Naive thymus-derived CD4-positive, alpha-beta T cell (primary cell): ENCODE measurements at regions of chr6 and their contacts with region 1.

Region 1: GRCh38 chr6:109095027-109095834 is at the start of gene CEP57L1:
- DNase-seq: peak; percentile 88 to 96 (median 94)
- ATAC-seq: peak; percentile 81
- H3K4me3 ChIP-seq: peak within 1 kb of the TSS; percentile 96
- H3K4me3 Mint-ChIP-seq: peak within 1 kb of the TSS; percentile 92 to 98 (median 96)
- H3K27ac ChIP-seq: peak within 1 kb of the TSS; percentile 94
- H3K27ac Mint-ChIP-seq: peak within 1 kb of the TSS; percentile 98 to 99 (median 99)
- H3K4me1 ChIP-seq: peaks cover 21 to 29% of the 10 kb centered on the region in 2 donors
- H3K4me1 Mint-ChIP-seq: peaks cover 26 to 64% (median 54%) of the 10 kb centered on the region in 7 donors
- H3K27me3 ChIP-seq: no peaks in the 10 kb centered on the region
- H3K27me3 Mint-ChIP-seq: no peaks in the 10 kb centered on the region
- total RNA-seq, gene CEP57L1: 3.1 to 17.2 (median 6.5) TPM

Region 2: GRCh38 chr6:108074359-108075144 is 1020.7 kb before region 1 on chr6 and contains the start of gene OSTM1:
- CTCF ChIA-PET with region 1: no interaction called
- POLR2A ChIA-PET with region 1: no interaction called
- intact Hi-C with region 1: loop called (anchors 1 kb)
- DNase-seq: peak; percentile 88 to 98 (median 94)
- ATAC-seq: peak; percentile 99
- H3K4me3 ChIP-seq: peak within 1 kb of the TSS; percentile 99
- H3K4me3 Mint-ChIP-seq: peak within 1 kb of the TSS; percentile 84 to 94 (median 90)
- H3K27ac ChIP-seq: peak within 1 kb of the TSS; percentile 89
- H3K27ac Mint-ChIP-seq: peak within 1 kb of the TSS; percentile 81 to 98 (median 91)
- H3K4me1 ChIP-seq: peaks cover 18% of the 10 kb centered on the region in 2 donors
- H3K4me1 Mint-ChIP-seq: peaks cover 11 to 35% (median 23%) of the 10 kb centered on the region in 7 donors
- H3K27me3 ChIP-seq: no peaks in the 10 kb centered on the region
- H3K27me3 Mint-ChIP-seq: peaks cover 0 to 25% (median 4%) of the 10 kb centered on the region in 5 donors
- total RNA-seq, gene OSTM1: 25.0 to 48.9 (median 36.7) TPM

Region 3: GRCh38 chr6:108558372-108559096 is 536.7 kb before region 1 on chr6:
- CTCF ChIA-PET with region 1: no interaction called
- POLR2A ChIA-PET with region 1: interaction called, 41 read pairs
- intact Hi-C with region 1: loop called (anchors 1 kb)
- DNase-seq: peak; percentile 91 to 98 (median 97)
- ATAC-seq: peak; percentile 75
- H3K4me3 ChIP-seq: peak overlapping the region; percentile 75
- H3K4me3 Mint-ChIP-seq: peak overlapping the region; percentile 88 to 98 (median 97)
- H3K27ac ChIP-seq: peak overlapping the region; percentile 100
- H3K27ac Mint-ChIP-seq: peak overlapping the region; percentile 87 to 99 (median 97)
- H3K4me1 ChIP-seq: peaks cover 12 to 13% of the 10 kb centered on the region in 2 donors
- H3K4me1 Mint-ChIP-seq: peaks cover 16 to 28% (median 20%) of the 10 kb centered on the region in 7 donors
- H3K27me3 ChIP-seq: no peaks in the 10 kb centered on the region
- H3K27me3 Mint-ChIP-seq: peaks cover 0 to 55% (median 6%) of the 10 kb centered on the region in 5 donors

Region 4: DNA sequence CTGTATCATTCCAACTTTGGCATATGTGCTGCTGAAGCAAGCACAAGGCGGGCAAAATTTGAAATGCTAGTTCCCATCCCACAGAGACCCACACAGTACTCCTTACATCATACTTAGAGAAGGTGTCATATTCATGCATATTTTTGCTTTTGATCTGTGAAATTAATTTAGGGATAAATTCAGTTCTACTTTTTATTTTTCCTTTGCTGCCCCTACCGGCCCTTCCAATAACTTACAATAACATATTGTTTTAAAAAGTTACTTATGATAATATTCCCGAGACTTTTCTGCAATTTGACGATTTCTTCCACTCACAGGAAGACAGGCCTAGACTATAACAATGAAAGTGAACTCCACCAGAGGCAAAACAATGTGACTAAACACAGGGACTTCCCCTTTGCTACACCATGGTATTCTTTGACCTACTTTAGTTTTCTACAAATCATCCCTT is 35.6 kb before region 1 on chr6:
- CTCF ChIA-PET with region 1: no interaction called
- POLR2A ChIA-PET with region 1: no interaction called
- intact Hi-C with region 1: loop called in 1 of 2 experiments (anchors 2 kb)
- DNase-seq: peak in 7 of 9 donors; percentile 24 to 61 (median 40)
- ATAC-seq: peak; percentile 98
- H3K4me3 ChIP-seq: no peak overlapping the region
- H3K4me3 Mint-ChIP-seq: peak overlapping the region; percentile 4 to 68 (median 51)
- H3K27ac ChIP-seq: peak overlapping the region; percentile 33
- H3K27ac Mint-ChIP-seq: peak overlapping the region; percentile 40 to 92 (median 80)
- H3K4me1 ChIP-seq: peaks cover 13 to 19% of the 10 kb centered on the region in 2 donors
- H3K4me1 Mint-ChIP-seq: peaks cover 18 to 75% (median 59%) of the 10 kb centered on the region in 7 donors
- H3K27me3 ChIP-seq: no peaks in the 10 kb centered on the region
- H3K27me3 Mint-ChIP-seq: peaks cover 0 to 8% (median 0%) of the 10 kb centered on the region in 5 donors

Region 5: DNA sequence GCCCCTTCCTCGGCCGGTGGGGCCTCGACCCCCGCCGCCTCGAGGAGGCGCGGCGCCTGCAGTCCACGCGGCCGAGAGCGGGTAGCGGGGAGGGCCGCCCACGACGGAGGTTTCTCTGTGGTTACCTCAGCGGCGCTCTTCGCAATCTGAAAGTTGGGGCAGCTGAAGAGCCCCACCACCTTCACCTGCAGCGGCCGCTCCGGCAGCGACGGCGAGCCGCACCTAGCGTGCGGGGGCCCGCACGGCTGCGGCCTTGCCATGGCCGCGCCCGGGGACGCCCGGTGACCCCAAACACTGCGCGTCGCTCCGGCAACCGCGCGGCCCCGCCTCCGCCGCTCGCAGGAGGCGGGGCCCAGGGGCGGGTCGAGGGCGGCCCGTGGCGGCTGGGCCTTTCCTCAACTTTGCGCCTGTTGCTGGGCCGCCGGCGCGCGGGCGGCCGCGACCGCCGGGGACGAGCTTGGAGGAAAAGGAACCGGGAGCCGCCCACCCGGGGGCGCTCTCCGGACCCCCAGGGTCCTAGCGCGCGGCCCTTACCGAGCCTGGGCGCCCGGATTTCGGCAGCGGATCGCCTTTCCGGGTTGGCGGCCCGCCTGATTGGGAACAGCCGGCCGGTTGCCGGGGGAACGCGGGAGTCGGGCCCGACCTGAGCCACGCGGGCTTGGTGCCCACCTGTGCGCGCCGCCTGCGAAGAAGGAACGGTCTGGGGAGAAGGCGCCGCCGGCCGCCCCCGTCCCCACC is 345.3 kb after region 1 on chr6 and contains the starts of genes PPIL6 and SMPD2:
- CTCF ChIA-PET with region 1: no interaction called
- POLR2A ChIA-PET with region 1: no interaction called
- intact Hi-C with region 1: loop called (anchors 1 kb)
- DNase-seq: peak; percentile 63 to 85 (median 77)
- ATAC-seq: peak; percentile 91
- H3K4me3 ChIP-seq: peak within 1 kb of the TSS; percentile 65
- H3K4me3 Mint-ChIP-seq: peak within 1 kb of the TSS; percentile 90 to 95 (median 94)
- H3K27ac ChIP-seq: peak within 1 kb of the TSS; percentile 98
- H3K27ac Mint-ChIP-seq: peak within 1 kb of the TSS; percentile 87 to 97 (median 93)
- H3K4me1 ChIP-seq: peaks cover 11% of the 10 kb centered on the region in 2 donors
- H3K4me1 Mint-ChIP-seq: peaks cover 10 to 32% (median 21%) of the 10 kb centered on the region in 7 donors
- H3K27me3 ChIP-seq: no peaks in the 10 kb centered on the region
- H3K27me3 Mint-ChIP-seq: peaks cover 0 to 2% (median 0%) of the 10 kb centered on the region in 5 donors
- total RNA-seq, gene PPIL6: 0.13 to 1.9 (median 0.40) TPM in 4 of 5 experiments, not detected in the other
- total RNA-seq, gene SMPD2: 16.9 to 33.7 (median 19.6) TPM

Region 6: DNA sequence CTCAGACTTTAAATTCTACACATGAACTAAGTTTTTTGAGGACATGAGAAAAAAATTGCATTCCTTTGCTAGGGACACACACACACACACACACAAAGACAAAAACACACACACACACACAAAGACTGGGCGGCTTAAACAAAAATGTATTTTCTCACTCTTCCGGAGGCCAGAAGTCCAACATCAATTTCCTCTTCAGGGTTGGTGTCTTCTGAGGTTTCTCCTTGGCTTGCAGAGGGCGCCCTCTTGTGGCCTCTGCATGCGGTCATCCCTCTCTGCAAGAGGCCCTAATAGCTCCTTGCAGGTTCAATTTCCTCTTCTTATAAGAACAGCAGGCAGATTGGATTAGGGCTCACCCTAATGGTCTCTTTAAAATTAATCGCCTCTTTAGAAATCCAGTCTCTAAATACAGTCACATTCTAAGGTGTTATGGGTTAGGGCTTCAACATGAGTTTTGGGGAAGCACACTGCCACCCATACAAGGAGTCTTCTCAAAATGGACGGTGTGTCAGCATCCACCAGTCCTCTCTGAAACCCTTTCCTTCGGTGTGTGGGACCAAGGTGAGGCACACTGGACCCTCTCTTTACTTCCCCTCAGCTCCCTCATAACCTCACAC is 944.2 kb after region 1 on chr6:
- CTCF ChIA-PET with region 1: no interaction called
- POLR2A ChIA-PET with region 1: interaction called, 4 read pairs
- intact Hi-C with region 1: loop called in 1 of 2 experiments (anchors 2 kb)
- DNase-seq: peak; percentile 66 to 81 (median 78)
- ATAC-seq: peak; percentile 92
- H3K4me3 ChIP-seq: peak overlapping the region; percentile 54
- H3K4me3 Mint-ChIP-seq: peak overlapping the region; percentile 89 to 97 (median 90)
- H3K27ac ChIP-seq: peak overlapping the region; percentile 53
- H3K27ac Mint-ChIP-seq: peak overlapping the region; percentile 80 to 98 (median 92)
- H3K4me1 ChIP-seq: peaks cover 0 to 14% of the 10 kb centered on the region in 2 donors
- H3K4me1 Mint-ChIP-seq: peaks cover 9 to 17% (median 13%) of the 10 kb centered on the region in 7 donors
- H3K27me3 ChIP-seq: no peaks in the 10 kb centered on the region
- H3K27me3 Mint-ChIP-seq: no peaks in the 10 kb centered on the region

Region 7: GRCh38 chr6:110958329-110959192 is 1863.3 kb after region 1 on chr6 and contains the start of gene GTF3C6:
- CTCF ChIA-PET with region 1: no interaction called
- POLR2A ChIA-PET with region 1: no interaction called
- intact Hi-C with region 1: loop called in 1 of 2 experiments (anchors 10 kb)
- DNase-seq: peak; percentile 85 to 94 (median 91)
- ATAC-seq: peak; percentile 99
- H3K4me3 ChIP-seq: peak within 1 kb of the TSS; percentile 86
- H3K4me3 Mint-ChIP-seq: peak within 1 kb of the TSS; percentile 95 to 99 (median 96)
- H3K27ac ChIP-seq: peak within 1 kb of the TSS; percentile 81
- H3K27ac Mint-ChIP-seq: peak within 1 kb of the TSS; percentile 96 to 99 (median 97)
- H3K4me1 ChIP-seq: peaks cover 4% of the 10 kb centered on the region in 2 donors
- H3K4me1 Mint-ChIP-seq: peaks cover 13 to 27% (median 20%) of the 10 kb centered on the region in 7 donors
- H3K27me3 ChIP-seq: no peaks in the 10 kb centered on the region
- H3K27me3 Mint-ChIP-seq: peaks cover 0 to 7% (median 0%) of the 10 kb centered on the region in 5 donors
- total RNA-seq, gene GTF3C6: 18.1 to 100 (median 29.9) TPM